ENCODE measurements at regions of chr14 and their contacts with region 1.

Region 1: GRCh38 chr14:37466623-37467088 is 128.4 kb downstream of the FOXA1 start:
- DNase-seq: no peak
- ATAC-seq: no peak
- H3K4me3 ChIP-seq: no peak overlapping the region
- H3K27ac ChIP-seq: no peak overlapping the region
- H3K4me1 ChIP-seq: no peaks in the 10 kb centered on the region
- H3K27me3 ChIP-seq: no peaks in the 10 kb centered on the region
- CTCF ChIP-seq: no peak

Region 2: GRCh38 chr14:37480446-37481290 is 14.0 kb after region 1 on chr14:
- intact Hi-C with region 1: loop called in 1 of 2 experiments (anchors 1 kb)
- DNase-seq: no peak
- ATAC-seq: no peak
- H3K4me3 ChIP-seq: no peak overlapping the region
- H3K27ac ChIP-seq: no peak overlapping the region
- H3K4me1 ChIP-seq: no peaks in the 10 kb centered on the region
- H3K27me3 ChIP-seq: no peaks in the 10 kb centered on the region
- CTCF ChIP-seq: no peak

Region 3: GRCh38 chr14:38016497-38016896 is 549.8 kb after region 1 on chr14:
- intact Hi-C with region 1: no loop called
- DNase-seq: no peak
- ATAC-seq: no peak
- H3K4me3 ChIP-seq: no peak overlapping the region
- H3K27ac ChIP-seq: no peak overlapping the region
- H3K4me1 ChIP-seq: no peaks in the 10 kb centered on the region
- H3K27me3 ChIP-seq: no peaks in the 10 kb centered on the region
- CTCF ChIP-seq: no peak